ENCODE measurements at regions of chr7 and their contacts with region 1.

Region 1: DNA sequence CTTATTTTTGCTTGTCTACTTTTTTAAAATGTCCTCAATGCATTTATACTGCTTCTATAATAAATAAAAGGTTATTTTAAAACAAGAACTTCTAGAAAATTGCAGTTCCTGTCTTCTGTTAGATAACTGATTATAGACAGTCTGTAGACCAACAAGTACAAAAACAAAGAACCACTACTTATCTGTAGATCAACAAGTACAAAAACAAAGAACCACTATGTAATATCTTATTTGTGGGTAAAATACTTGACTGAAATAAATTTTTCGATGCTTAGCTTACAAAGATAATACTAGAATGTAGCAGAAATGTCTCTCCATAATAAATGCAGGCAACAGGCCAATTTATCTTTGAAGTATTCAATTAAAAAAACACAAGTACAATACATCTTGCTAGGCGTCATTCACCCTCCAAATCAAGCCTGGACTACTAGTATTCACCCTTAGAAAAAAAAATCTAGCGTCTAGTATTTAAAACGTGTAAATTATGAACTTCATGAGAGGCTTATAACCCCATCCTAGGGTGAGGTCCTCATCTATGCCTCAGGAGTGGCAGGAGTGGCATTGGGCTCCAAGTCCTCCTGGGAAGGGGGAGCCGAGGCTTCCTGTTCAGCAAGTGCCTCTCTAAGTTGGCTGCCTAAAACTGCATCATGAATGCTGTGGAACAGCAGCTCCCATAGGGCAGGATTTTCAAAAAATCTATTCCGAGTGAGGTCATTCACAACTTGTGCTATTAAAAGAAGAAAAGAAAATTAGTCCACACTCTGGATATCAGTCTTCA is 26.6 kb downstream of the PSMC2 start:
- DNase-seq: no peak
- ATAC-seq: peak in 1 of 4 experiments; percentile 38
- H3K4me3 ChIP-seq: no peak overlapping the region
- H3K4me3 Mint-ChIP-seq: no peak overlapping the region
- H3K27ac ChIP-seq: no peak overlapping the region
- H3K27ac Mint-ChIP-seq: peak overlapping the region; percentile 65 to 72
- H3K4me1 ChIP-seq: no peaks in the 10 kb centered on the region
- H3K4me1 Mint-ChIP-seq: peaks cover 0 to 14% (median 6%) of the 10 kb centered on the region in 3 donors
- H3K27me3 ChIP-seq: no peaks in the 10 kb centered on the region
- H3K27me3 Mint-ChIP-seq: peaks cover 2 to 7% of the 10 kb centered on the region in 2 donors

Region 2: GRCh38 chr7:105185290-105186010 is 1811.4 kb after region 1 on chr7:
- CTCF ChIA-PET with region 1: no interaction called
- POLR2A ChIA-PET with region 1: interaction called in 1 of 2 experiments, 14 read pairs
- DNase-seq: no peak
- ATAC-seq: no peak
- H3K4me3 ChIP-seq: no peak overlapping the region
- H3K4me3 Mint-ChIP-seq: no peak overlapping the region
- H3K27ac ChIP-seq: no peak overlapping the region
- H3K27ac Mint-ChIP-seq: no peak overlapping the region
- H3K4me1 ChIP-seq: no peaks in the 10 kb centered on the region
- H3K4me1 Mint-ChIP-seq: peaks cover 29 to 36% (median 32%) of the 10 kb centered on the region in 3 donors
- H3K27me3 ChIP-seq: no peaks in the 10 kb centered on the region
- H3K27me3 Mint-ChIP-seq: no peaks in the 10 kb centered on the region